CD4-positive, alpha-beta T cell (primary cell): ENCODE measurements at regions of chr17 and their contacts with region 1.

Region 1: DNA sequence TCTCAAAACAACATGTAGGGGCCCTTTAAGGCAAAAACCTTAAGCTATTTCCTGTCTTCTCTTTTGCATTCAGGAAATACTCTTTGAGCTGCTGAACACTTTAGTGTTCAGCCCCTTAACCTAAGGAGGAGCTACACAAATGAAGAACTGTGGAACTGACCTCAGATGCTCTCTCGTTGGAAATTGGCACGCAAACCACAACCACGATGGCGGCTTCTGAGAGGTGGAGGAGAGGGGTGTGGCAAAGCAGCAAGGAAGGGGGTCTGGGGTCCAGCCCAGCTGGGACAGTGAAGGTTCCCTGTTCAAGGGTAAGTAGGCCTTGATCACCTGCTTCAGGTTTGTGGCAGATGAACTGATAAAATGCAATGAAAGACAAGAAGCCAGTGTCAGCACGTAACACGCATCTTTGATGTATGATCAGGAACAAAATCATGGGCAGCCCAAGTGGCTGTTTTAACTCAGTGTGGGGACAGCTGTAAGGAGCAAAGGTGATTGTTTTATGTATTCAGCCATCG is 291.6 kb upstream of the TNRC6C start:
- DNase-seq: peak; percentile 41 to 92 (median 58)
- ATAC-seq: peak; percentile 91
- H3K4me3 ChIP-seq: peak overlapping the region; percentile 58
- H3K4me3 Mint-ChIP-seq: peak overlapping the region; percentile 82
- H3K27ac ChIP-seq: peak overlapping the region; percentile 66 to 72
- H3K27ac Mint-ChIP-seq: peak overlapping the region; percentile 93
- H3K4me1 ChIP-seq: peaks cover 24% of the 10 kb centered on the region
- H3K4me1 Mint-ChIP-seq: peaks cover 53% of the 10 kb centered on the region
- H3K27me3 ChIP-seq: no peaks in the 10 kb centered on the region
- H3K27me3 Mint-ChIP-seq: no peaks in the 10 kb centered on the region
- CTCF ChIP-seq: no peak

Region 2: GRCh38 chr17:77609553-77610517 is 57.1 kb before region 1 on chr17:
- CTCF ChIA-PET with region 1: no interaction called
- POLR2A ChIA-PET with region 1: interaction called, 16 read pairs
- intact Hi-C with region 1: loop called (anchors 1 to 5 kb)
- DNase-seq: peak; percentile 39 to 85 (median 60)
- ATAC-seq: peak; percentile 98
- H3K4me3 ChIP-seq: peak overlapping the region; percentile 32
- H3K4me3 Mint-ChIP-seq: peak overlapping the region; percentile 87
- H3K27ac ChIP-seq: peak overlapping the region; percentile 2 to 54
- H3K27ac Mint-ChIP-seq: peak overlapping the region; percentile 93
- H3K4me1 ChIP-seq: peaks cover 22% of the 10 kb centered on the region
- H3K4me1 Mint-ChIP-seq: peaks cover 27% of the 10 kb centered on the region
- H3K27me3 ChIP-seq: no peaks in the 10 kb centered on the region
- H3K27me3 Mint-ChIP-seq: no peaks in the 10 kb centered on the region
- CTCF ChIP-seq: no peak

Region 3: GRCh38 chr17:77645072-77646045 is 21.6 kb before region 1 on chr17:
- CTCF ChIA-PET with region 1: no interaction called
- POLR2A ChIA-PET with region 1: interaction called, 43 read pairs
- intact Hi-C with region 1: loop called in 1 of 2 experiments (anchors 2 kb)
- DNase-seq: peak; percentile 25 to 75 (median 52)
- ATAC-seq: peak; percentile 88
- H3K4me3 ChIP-seq: peak overlapping the region; percentile 49
- H3K4me3 Mint-ChIP-seq: peak overlapping the region; percentile 68
- H3K27ac ChIP-seq: no peak overlapping the region
- H3K27ac Mint-ChIP-seq: peak overlapping the region; percentile 77
- H3K4me1 ChIP-seq: peaks cover 25% of the 10 kb centered on the region
- H3K4me1 Mint-ChIP-seq: peaks cover 20% of the 10 kb centered on the region
- H3K27me3 ChIP-seq: no peaks in the 10 kb centered on the region
- H3K27me3 Mint-ChIP-seq: no peaks in the 10 kb centered on the region
- CTCF ChIP-seq: peak; percentile 57

Region 4: DNA sequence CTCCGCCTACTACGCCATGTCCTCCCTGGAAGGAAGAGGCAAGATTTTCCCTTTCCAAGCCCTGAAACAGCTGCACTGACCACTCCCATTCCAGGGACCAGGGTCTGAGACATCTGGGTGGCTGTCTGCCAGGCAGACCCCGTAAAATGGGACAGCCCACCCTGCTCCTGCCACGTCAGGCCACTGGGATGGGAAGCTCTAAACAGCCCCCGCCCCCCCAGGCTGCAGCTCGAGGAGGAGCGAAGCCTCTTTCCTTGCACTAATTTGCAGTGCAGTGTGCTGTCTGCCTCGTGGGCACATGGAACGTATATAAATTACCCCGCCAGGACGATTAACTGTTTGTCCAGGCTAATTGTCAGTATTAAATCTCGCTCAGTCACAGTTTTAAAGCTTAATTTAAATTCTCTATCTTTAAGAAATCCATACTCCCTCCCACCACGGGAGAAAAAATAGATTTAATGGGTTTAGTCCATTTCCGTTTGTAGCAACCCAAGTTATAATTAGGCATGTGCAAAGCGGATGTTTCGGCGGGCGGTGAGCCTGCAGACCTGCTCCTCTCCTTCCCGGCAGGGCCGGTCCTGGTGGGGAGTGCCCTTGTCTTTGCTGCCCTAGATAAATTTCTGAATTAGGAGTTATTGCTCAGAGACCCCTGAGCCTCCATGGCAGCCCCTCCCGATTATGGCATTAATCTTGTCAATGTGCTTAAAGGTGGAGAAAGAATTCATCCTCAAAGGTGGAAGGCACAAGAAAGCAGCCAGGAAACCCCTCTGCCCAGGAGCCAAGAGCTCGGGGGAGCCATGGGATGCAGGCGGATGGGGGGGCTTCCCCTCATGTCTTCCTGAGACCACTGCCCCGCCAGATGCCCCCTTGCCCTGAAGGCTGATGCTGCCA is 23.6 kb after region 1 on chr17:
- CTCF ChIA-PET with region 1: interaction called, 3 read pairs
- POLR2A ChIA-PET with region 1: interaction called, 12 read pairs
- intact Hi-C with region 1: no loop called
- DNase-seq: peak in 6 of 14 experiments; percentile 12 to 47 (median 37)
- ATAC-seq: peak; percentile 39
- H3K4me3 ChIP-seq: peak overlapping the region; percentile 21
- H3K4me3 Mint-ChIP-seq: peak overlapping the region; percentile 13
- H3K27ac ChIP-seq: no peak overlapping the region
- H3K27ac Mint-ChIP-seq: no peak overlapping the region
- H3K4me1 ChIP-seq: peaks cover 39% of the 10 kb centered on the region
- H3K4me1 Mint-ChIP-seq: peaks cover 39% of the 10 kb centered on the region
- H3K27me3 ChIP-seq: peaks cover 0 to 5% of the 10 kb centered on the region in 2 experiments
- H3K27me3 Mint-ChIP-seq: peaks cover 10% of the 10 kb centered on the region
- CTCF ChIP-seq: no peak

Region 5: DNA sequence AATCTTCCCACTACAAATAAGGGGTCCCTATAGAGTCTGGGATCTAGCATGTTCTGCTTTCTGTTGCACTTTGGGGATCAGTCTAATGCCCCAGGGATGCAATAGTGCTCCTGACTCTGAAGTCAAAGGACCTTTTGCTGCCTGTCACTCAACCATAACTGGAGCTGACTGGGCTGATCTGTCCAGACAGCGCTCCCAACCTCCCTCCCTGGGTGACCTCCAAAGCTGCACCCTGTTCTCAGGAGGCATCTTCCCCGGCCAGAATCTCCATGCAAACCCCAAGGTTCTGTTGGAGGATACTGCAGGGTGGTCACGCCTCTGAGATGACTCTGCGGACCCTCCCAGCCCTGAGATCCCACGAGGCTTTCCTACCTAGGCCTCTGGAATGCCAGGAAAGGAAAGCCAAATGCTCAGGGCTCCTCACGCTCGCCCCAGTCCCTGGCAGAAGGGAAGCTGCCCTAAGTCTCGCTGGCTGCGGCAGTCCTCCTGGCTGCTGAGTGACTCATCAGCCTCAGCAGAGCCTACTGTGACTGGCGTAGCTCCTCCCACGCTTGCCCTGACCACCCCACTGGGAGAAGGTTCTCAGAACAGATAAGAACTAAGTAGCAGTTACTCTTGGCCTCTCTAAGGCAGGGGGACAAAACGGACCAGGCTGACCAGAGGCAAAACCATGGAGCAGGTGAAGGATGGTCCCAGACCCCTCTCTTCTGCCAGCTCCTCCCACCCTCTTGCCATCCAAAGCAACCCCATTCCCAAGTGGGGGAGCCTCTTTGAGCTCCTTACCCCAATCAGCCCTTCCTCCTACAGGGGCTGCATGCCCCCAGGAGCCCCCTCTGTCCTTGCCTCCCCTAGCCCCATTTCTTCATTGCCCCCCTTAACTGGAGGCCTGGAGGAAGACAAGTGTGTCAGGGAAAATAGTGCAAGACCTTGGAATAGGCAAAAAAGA is 167.5 kb after region 1 on chr17:
- CTCF ChIA-PET with region 1: no interaction called
- POLR2A ChIA-PET with region 1: no interaction called
- intact Hi-C with region 1: no loop called
- DNase-seq: peak in 13 of 14 experiments; percentile 29 to 81 (median 58)
- ATAC-seq: peak; percentile 90
- H3K4me3 ChIP-seq: no peak overlapping the region
- H3K4me3 Mint-ChIP-seq: no peak overlapping the region
- H3K27ac ChIP-seq: no peak overlapping the region
- H3K27ac Mint-ChIP-seq: no peak overlapping the region
- H3K4me1 ChIP-seq: peaks cover 27% of the 10 kb centered on the region
- H3K4me1 Mint-ChIP-seq: peaks cover 20% of the 10 kb centered on the region
- H3K27me3 ChIP-seq: no peaks in the 10 kb centered on the region
- H3K27me3 Mint-ChIP-seq: peaks cover 4% of the 10 kb centered on the region
- CTCF ChIP-seq: no peak

Region 6: DNA sequence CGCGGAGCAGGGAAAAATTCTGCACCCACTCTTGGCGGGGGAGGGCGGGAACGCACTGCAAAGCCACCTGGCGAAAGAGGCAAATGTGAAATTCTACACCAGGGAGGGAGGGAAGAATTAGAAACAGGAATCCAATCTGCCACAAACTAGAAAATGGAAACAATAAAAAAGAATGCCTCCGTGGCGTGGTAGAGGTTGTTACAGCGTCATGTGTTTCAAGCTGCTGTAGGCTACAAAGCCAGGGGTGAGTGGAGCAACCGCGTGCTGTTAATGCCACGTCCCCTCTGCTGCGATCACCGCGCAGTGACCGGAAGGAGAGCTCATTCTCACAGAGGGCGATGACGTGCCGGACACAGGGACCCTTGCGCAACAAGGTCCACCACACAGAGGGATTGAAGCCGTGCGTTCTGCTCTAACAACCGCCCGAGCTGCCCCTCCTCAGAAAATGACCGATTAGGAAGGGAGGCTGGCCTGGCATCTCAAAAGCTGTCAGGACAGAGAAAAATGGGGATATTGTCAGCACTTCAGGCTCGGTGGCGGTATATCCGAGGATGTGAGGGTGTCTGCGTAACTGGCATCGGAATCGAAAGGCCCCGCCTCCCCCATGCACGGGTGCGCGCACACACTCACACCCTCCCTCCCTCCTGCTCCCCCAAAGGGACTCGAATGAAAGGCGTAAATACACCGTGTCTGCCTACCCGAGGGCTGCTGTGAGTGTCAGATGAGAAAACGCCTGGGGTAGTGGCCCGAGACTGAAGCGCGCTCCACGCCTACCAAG is 220.7 kb after region 1 on chr17:
- CTCF ChIA-PET with region 1: no interaction called
- POLR2A ChIA-PET with region 1: interaction called, 15 read pairs
- intact Hi-C with region 1: loop called in 1 of 2 experiments (anchors 5 kb)
- DNase-seq: peak; percentile 68 to 94 (median 80)
- ATAC-seq: peak; percentile 93
- H3K4me3 ChIP-seq: peak overlapping the region; percentile 67
- H3K4me3 Mint-ChIP-seq: peak overlapping the region; percentile 95
- H3K27ac ChIP-seq: peak overlapping the region; percentile 89 to 93
- H3K27ac Mint-ChIP-seq: peak overlapping the region; percentile 99
- H3K4me1 ChIP-seq: peaks cover 57% of the 10 kb centered on the region
- H3K4me1 Mint-ChIP-seq: peaks cover 53% of the 10 kb centered on the region
- H3K27me3 ChIP-seq: no peaks in the 10 kb centered on the region
- H3K27me3 Mint-ChIP-seq: no peaks in the 10 kb centered on the region
- CTCF ChIP-seq: no peak